ENCODE measurements at regions of chr7 and their contacts with region 1.

Region 1: DNA sequence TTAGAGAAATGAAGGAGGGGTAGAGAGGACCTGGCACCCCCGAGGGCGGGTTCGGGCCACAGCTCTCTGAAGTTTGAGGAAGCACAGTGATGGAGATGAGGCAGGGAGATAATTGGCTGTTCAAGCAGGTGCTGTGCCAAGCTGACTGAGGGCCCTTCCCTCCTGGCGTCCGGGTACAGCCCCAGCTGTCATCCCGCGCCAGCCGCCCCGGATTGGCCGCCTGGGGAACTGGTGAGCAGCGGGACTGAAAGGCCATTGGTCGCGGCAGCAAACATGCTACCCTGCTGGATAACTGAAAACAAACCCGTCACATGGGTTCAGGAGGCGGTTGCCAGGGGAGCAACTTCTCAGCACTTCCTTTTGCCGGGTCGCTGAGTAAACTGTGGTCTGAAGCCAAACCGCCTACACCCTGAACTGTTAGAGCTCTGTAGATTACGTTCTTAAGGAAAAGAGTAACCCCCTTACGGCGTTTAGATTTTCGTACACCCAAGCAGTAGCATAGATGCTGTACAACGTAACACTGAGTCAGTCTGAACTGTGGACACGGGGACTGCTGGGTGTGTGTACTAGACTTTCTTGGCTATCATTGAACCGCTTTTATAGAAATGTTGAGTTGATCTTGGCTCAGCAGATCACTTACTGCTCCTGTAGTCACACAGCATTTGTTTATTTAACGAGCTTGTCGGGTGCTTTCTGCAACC is 1.3 kb downstream of the INSIG1 start:
- DNase-seq: peak; percentile 98
- ATAC-seq: peak; percentile 83
- H3K4me3 Mint-ChIP-seq: peak overlapping the region; percentile 96
- H3K27ac Mint-ChIP-seq: peak overlapping the region; percentile 93
- H3K4me1 Mint-ChIP-seq: peaks cover 33% of the 10 kb centered on the region
- H3K27me3 Mint-ChIP-seq: no peaks in the 10 kb centered on the region

Region 2: GRCh38 chr7:154937837-154938236 is 361.1 kb before region 1 on chr7:
- CTCF ChIA-PET with region 1: no interaction called
- POLR2A ChIA-PET with region 1: no interaction called
- intact Hi-C with region 1: no loop called
- DNase-seq: no peak
- ATAC-seq: no peak
- H3K4me3 Mint-ChIP-seq: no peak overlapping the region
- H3K27ac Mint-ChIP-seq: no peak overlapping the region
- H3K4me1 Mint-ChIP-seq: peaks cover 3% of the 10 kb centered on the region
- H3K27me3 Mint-ChIP-seq: no peaks in the 10 kb centered on the region

Region 3: GRCh38 chr7:155003376-155004214 is 295.4 kb before region 1 on chr7:
- CTCF ChIA-PET with region 1: interaction called, 4 read pairs
- POLR2A ChIA-PET with region 1: interaction called, 14 read pairs
- intact Hi-C with region 1: loop called (anchors 1 to 2 kb)
- DNase-seq: peak; percentile 91
- ATAC-seq: peak; percentile 82
- H3K4me3 Mint-ChIP-seq: peak overlapping the region; percentile 91
- H3K27ac Mint-ChIP-seq: peak overlapping the region; percentile 85
- H3K4me1 Mint-ChIP-seq: peaks cover 12% of the 10 kb centered on the region
- H3K27me3 Mint-ChIP-seq: no peaks in the 10 kb centered on the region

Region 4: DNA sequence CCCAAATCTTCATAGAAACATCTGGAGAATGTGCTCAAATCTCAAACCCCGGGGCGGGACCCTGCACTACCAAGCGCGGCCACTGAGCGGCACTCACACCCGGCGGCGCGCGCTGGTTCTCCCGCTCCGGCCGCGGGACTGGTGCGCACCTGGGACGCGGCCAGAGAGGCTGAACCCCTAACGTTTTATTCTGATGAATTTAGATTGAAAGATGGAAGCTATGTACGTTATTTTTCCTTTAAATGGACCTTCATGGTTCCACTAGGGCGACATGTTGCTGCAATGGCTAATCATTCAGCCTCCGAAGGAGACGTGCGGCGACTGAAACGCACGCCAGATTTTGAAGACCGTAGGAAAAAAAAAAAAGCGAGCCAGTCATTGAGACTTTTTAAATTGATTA is 108.3 kb before region 1 on chr7:
- CTCF ChIA-PET with region 1: interaction called, 12 read pairs
- POLR2A ChIA-PET with region 1: no interaction called
- intact Hi-C with region 1: loop called in 1 of 2 experiments (anchors 1 kb)
- DNase-seq: peak; percentile 82
- ATAC-seq: peak; percentile 64
- H3K4me3 Mint-ChIP-seq: no peak overlapping the region
- H3K27ac Mint-ChIP-seq: no peak overlapping the region
- H3K4me1 Mint-ChIP-seq: peaks cover 35% of the 10 kb centered on the region
- H3K27me3 Mint-ChIP-seq: peaks cover 5% of the 10 kb centered on the region

Region 5: GRCh38 chr7:155283565-155284194 is 15.3 kb before region 1 on chr7:
- CTCF ChIA-PET with region 1: interaction called, 4 read pairs
- POLR2A ChIA-PET with region 1: interaction called, 3 read pairs
- intact Hi-C with region 1: loop called in 1 of 2 experiments (anchors 2 kb)
- DNase-seq: peak; percentile 46
- ATAC-seq: peak; percentile 74
- H3K4me3 Mint-ChIP-seq: no peak overlapping the region
- H3K27ac Mint-ChIP-seq: no peak overlapping the region
- H3K4me1 Mint-ChIP-seq: peaks cover 54% of the 10 kb centered on the region
- H3K27me3 Mint-ChIP-seq: peaks cover 5% of the 10 kb centered on the region

Region 6: GRCh38 chr7:155738652-155739537 is 439.9 kb after region 1 on chr7:
- CTCF ChIA-PET with region 1: no interaction called
- POLR2A ChIA-PET with region 1: no interaction called
- intact Hi-C with region 1: loop called in 1 of 2 experiments (anchors 2 kb)
- DNase-seq: peak; percentile 85
- ATAC-seq: peak; percentile 68
- H3K4me3 Mint-ChIP-seq: peak overlapping the region; percentile 21
- H3K27ac Mint-ChIP-seq: peak overlapping the region; percentile 72
- H3K4me1 Mint-ChIP-seq: peaks cover 64% of the 10 kb centered on the region
- H3K27me3 Mint-ChIP-seq: no peaks in the 10 kb centered on the region

Region 7: DNA sequence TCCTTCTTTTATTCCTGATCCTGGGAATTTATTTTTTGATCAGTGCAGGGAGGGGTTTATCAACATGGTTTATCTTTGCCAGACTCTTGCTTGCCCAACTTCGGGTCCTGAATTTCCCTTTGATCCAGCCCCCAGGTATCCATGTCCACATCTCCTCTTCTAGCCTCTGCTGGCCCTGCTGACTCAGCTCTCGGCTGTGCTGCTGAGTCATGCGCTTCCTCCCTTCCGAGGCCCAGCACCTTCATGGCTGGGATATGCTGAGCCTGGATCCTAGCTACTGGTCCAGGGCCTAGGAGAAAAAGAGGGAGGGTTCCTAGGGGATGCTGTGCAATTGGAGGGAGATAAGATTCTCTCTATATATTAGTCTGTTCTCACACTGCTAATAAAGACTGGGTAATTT is 893.9 kb after region 1 on chr7:
- CTCF ChIA-PET with region 1: no interaction called
- POLR2A ChIA-PET with region 1: no interaction called
- intact Hi-C with region 1: no loop called
- DNase-seq: no peak
- ATAC-seq: no peak
- H3K4me3 Mint-ChIP-seq: no peak overlapping the region
- H3K27ac Mint-ChIP-seq: no peak overlapping the region
- H3K4me1 Mint-ChIP-seq: no peaks in the 10 kb centered on the region
- H3K27me3 Mint-ChIP-seq: peaks cover 16% of the 10 kb centered on the region

Region 8: DNA sequence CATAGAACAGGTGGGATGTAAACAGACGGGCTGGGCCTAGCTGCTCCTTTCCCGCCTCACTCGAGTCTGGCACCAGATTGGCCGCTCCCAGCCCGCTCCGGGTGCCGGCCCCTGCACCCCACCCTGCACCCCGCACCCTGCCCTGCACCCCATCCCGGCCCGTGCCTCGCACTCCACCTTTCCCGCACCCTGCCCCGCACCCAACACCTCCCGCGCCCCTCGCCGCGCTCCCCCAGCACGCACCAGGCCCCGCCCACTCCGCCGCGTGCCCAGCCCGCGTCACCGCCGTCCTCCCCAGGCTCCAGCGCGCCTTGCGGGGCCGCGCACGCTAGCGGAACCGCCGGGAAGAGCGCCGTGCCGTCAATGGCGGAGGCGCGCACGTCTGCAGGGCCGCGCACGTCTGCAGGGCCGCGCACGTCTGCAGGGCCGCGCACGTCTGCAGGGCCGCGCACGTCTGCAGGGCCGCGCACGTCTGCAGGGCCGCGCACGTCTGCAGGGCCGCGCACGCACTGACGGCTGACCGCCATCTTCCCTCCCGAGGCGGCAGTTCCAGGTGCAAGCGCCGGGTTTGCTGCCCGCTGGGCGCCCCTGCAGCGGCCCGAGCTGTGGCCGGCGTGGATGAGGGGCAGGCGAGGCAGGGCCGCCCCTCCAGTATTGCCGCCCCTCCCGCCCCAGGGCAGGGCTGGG is 1839.6 kb after region 1 on chr7 and contains the start of gene UBE3C:
- CTCF ChIA-PET with region 1: no interaction called
- POLR2A ChIA-PET with region 1: no interaction called
- intact Hi-C with region 1: loop called in 1 of 2 experiments (anchors 2 kb)
- DNase-seq: peak; percentile 94
- ATAC-seq: peak; percentile 87
- H3K4me3 Mint-ChIP-seq: peak within 1 kb of the TSS; percentile 84
- H3K27ac Mint-ChIP-seq: peak within 1 kb of the TSS; percentile 89
- H3K4me1 Mint-ChIP-seq: peaks cover 41% of the 10 kb centered on the region
- H3K27me3 Mint-ChIP-seq: no peaks in the 10 kb centered on the region
- total RNA-seq, gene UBE3C: 53.9 to 60.7 TPM

Measured in activated CD4-positive, alpha-beta T cell treated with anti-CD3 and anti-CD28 coated beads for 36 hours (primary cell).